Ovary (tissue), 10 donors: ENCODE measurements at regions of chr13 and their contacts with region 1.

Region 1: DNA sequence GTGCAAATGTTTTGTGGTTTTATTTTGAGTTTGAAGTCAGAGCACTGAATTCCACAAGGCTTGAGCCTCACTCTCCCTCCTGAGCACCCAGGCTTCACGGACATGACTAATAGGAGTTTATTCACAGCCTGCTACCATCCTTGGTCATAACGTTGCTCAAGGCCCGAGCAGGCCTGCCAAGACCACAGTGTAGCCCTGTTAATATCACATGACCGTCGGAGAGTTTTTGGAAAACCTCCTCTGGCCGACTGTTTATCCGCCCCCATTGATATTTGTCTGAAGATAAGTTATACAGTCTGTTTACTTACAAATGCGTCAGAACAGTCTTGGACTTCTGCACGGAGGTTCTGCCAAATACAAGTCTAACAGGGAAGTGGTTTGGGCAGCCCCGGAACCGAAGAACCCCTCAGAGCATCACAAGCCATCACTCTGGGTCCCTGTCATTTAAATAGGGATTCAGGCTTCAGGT is 89.9 kb downstream of the COL4A2 start:
- DNase-seq: peak; percentile 87 to 96 (median 92)
- H3K4me3 ChIP-seq: peak overlapping the region; percentile 24
- H3K27ac ChIP-seq: peak overlapping the region; percentile 76 to 86
- H3K4me1 ChIP-seq: peaks cover 24% of the 10 kb centered on the region
- H3K27me3 ChIP-seq: no peaks in the 10 kb centered on the region
- CTCF ChIP-seq: no peak
- EP300 ChIP-seq: peak; percentile 93
- POLR2A ChIP-seq: no peak

Region 2: GRCh38 chr13:109182777-109183465 is 1214.0 kb before region 1 on chr13:
- intact Hi-C with region 1: no loop called
- DNase-seq: no peak
- H3K4me3 ChIP-seq: no peak overlapping the region
- H3K27ac ChIP-seq: no peak overlapping the region
- H3K4me1 ChIP-seq: no peaks in the 10 kb centered on the region
- H3K27me3 ChIP-seq: no peaks in the 10 kb centered on the region
- CTCF ChIP-seq: no peak
- EP300 ChIP-seq: no peak
- POLR2A ChIP-seq: no peak

Region 3: DNA sequence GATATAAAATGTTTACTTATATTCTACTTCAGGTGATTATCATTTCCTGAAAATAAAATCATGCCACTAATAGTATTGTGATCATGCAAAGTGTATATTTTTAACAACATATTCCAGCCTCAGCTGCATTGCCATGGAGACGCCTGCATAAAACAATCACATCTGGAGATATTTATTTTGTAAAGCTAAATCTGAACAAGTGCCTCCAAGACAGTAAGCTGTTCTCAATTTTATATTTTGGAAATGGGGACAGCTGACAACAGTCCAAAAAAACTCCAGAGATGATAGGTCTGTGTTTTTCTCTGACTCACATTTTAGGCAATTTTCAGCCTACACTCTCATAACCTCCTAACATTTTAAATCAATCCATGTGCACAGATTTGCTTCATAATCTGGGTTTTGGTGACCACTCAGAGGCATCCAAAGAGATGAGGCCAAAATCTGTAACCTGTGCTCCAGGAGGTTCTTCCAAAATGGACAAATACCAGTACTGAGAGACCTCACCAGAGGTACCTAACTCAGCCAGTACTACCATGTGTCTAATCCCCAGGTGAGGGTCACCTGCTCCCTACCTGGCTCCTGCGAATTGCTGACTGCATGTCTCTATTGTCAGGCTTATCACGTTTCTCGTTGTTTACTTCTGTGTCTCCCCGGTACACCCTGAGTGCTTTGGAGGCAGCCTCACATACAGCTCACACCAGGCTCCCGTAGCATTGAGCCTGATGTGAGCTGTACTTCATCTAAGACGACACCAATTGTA is 152.7 kb before region 1 on chr13:
- intact Hi-C with region 1: loop called in 1 of 4 experiments (anchors 5 kb)
- DNase-seq: no peak
- H3K4me3 ChIP-seq: no peak overlapping the region
- H3K27ac ChIP-seq: no peak overlapping the region
- H3K4me1 ChIP-seq: peaks cover 22% of the 10 kb centered on the region
- H3K27me3 ChIP-seq: no peaks in the 10 kb centered on the region
- CTCF ChIP-seq: no peak
- EP300 ChIP-seq: no peak
- POLR2A ChIP-seq: no peak

Region 4: DNA sequence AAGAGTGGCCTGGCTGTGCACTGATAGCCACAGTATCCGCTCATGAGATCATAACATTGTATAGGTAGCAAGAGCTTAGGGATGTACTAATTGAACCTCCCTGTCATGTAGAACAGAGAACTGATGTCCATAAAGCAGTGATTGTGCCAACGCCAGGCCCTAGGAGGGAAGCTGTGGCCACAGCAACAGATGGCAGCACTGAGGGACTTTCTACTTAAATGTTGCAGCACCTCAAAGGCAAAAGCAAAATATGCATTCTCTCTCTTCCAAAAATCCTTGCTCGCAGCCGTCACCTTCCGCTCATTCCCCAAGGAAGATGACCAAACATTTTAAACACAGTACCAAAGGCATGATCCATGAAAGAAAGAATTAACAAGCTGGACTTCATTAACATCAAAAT is 122.3 kb before region 1 on chr13:
- intact Hi-C with region 1: no loop called
- DNase-seq: no peak
- H3K4me3 ChIP-seq: no peak overlapping the region
- H3K27ac ChIP-seq: no peak overlapping the region
- H3K4me1 ChIP-seq: peaks cover 24% of the 10 kb centered on the region
- H3K27me3 ChIP-seq: no peaks in the 10 kb centered on the region
- CTCF ChIP-seq: no peak
- EP300 ChIP-seq: no peak
- POLR2A ChIP-seq: no peak

Region 5: DNA sequence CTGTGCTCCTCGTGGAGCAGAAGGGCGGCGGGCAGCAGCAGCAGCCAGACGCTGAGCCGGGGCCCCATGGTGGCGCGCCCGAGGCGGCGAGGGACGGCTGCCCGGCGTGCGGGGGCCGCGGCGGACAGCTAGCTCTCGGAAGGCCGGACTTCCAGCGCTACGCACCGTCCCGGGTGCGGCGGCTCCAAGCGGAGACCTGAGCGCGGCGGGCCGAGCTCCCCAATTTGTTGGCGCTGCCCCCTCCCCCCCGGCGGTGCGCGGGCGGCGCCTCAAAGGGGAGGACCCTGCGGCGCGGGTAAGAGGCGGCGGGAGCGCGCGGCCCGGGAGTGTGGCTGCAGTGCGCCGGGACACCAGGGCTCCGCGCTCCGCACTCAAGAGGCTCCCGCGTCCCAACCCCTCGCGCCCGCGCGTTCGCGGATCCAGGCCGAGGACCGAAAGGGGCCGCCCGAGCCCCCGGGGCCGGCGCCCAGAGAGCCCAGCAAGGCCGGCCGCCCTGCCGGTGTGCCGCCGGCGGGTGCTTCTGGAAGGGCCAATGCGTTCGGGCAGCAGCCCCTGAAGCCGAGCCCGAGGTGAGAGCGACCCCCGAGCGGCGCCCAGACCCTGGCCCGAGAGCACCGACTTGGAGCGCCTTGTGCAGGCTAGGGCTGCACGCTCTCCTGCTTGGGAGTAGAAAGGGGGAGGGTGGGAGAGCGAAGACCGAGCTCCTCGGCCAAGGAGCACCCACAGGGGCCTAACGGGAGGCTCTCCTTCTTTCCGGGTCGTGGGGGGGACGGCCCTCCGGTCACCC is 89.8 kb before region 1 on chr13 and contains the starts of genes COL4A1 and COL4A2:
- intact Hi-C with region 1: loop called in 1 of 4 experiments (anchors 5 kb)
- DNase-seq: peak; percentile 83 to 90 (median 89)
- H3K4me3 ChIP-seq: peak within 1 kb of the TSS; percentile 85
- H3K27ac ChIP-seq: peak within 1 kb of the TSS; percentile 87 to 93
- H3K4me1 ChIP-seq: peaks cover 27% of the 10 kb centered on the region
- H3K27me3 ChIP-seq: no peaks in the 10 kb centered on the region
- CTCF ChIP-seq: peak in 2 of 3 donors; percentile 4 to 35
- EP300 ChIP-seq: no peak
- POLR2A ChIP-seq: peak; percentile 93
- total RNA-seq, gene COL4A1: 42.3 to 106 (median 73.2) TPM
- total RNA-seq, gene COL4A2: 59.5 to 171 (median 120) TPM

Region 6: GRCh38 chr13:110340812-110341444 is 56.0 kb before region 1 on chr13:
- intact Hi-C with region 1: loop called in 2 of 4 experiments (anchors 5 to 10 kb)
- DNase-seq: peak; percentile 72 to 85 (median 83)
- H3K4me3 ChIP-seq: peak overlapping the region; percentile 10
- H3K27ac ChIP-seq: peak overlapping the region; percentile 73 to 86
- H3K4me1 ChIP-seq: peaks cover 27% of the 10 kb centered on the region
- H3K27me3 ChIP-seq: no peaks in the 10 kb centered on the region
- CTCF ChIP-seq: no peak
- EP300 ChIP-seq: peak; percentile 85
- POLR2A ChIP-seq: no peak

Region 7: GRCh38 chr13:110347535-110348308 is 49.2 kb before region 1 on chr13:
- intact Hi-C with region 1: loop called in 2 of 4 experiments (anchors 5 to 10 kb)
- DNase-seq: no peak
- H3K4me3 ChIP-seq: no peak overlapping the region
- H3K27ac ChIP-seq: no peak overlapping the region
- H3K4me1 ChIP-seq: peaks cover 12% of the 10 kb centered on the region
- H3K27me3 ChIP-seq: no peaks in the 10 kb centered on the region
- CTCF ChIP-seq: no peak
- EP300 ChIP-seq: no peak
- POLR2A ChIP-seq: no peak